ENCODE measurements at regions of chr12 and their contacts with region 1.

Region 1: GRCh38 chr12:98644711-98645402 is at the starts of genes APAF1 and IKBIP:
- DNase-seq: peak; percentile 94 to 98
- H3K4me3 ChIP-seq: peak within 1 kb of the TSS; percentile 95
- H3K4me3 Mint-ChIP-seq: peak within 1 kb of the TSS; percentile 86
- H3K27ac Mint-ChIP-seq: peak within 1 kb of the TSS; percentile 75
- H3K4me1 ChIP-seq: peaks cover 4% of the 10 kb centered on the region; the same call in 1 of the 2 replicates
- H3K4me1 Mint-ChIP-seq: peaks cover 7% of the 10 kb centered on the region
- H3K27me3 ChIP-seq: no peaks in the 10 kb centered on the region
- H3K27me3 Mint-ChIP-seq: no peaks in the 10 kb centered on the region
- CTCF ChIP-seq: no peak
- total RNA-seq, gene APAF1: 13.4 and 16.5 TPM in 2 replicates
- total RNA-seq, gene IKBIP: 9.9 and 10.9 TPM in 2 replicates

Region 2: GRCh38 chr12:96719660-96720363 is 1925.0 kb before region 1 on chr12:
- CTCF ChIA-PET with region 1: no interaction called
- POLR2A ChIA-PET with region 1: no interaction called
- intact Hi-C with region 1: no loop called
- DNase-seq: no peak
- H3K4me3 ChIP-seq: no peak overlapping the region
- H3K4me3 Mint-ChIP-seq: peak overlapping the region; percentile 63
- H3K27ac Mint-ChIP-seq: no peak overlapping the region
- H3K4me1 ChIP-seq: no peaks in the 10 kb centered on the region
- H3K4me1 Mint-ChIP-seq: no peaks in the 10 kb centered on the region
- H3K27me3 ChIP-seq: no peaks in the 10 kb centered on the region
- H3K27me3 Mint-ChIP-seq: no peaks in the 10 kb centered on the region
- CTCF ChIP-seq: no peak

Region 3: GRCh38 chr12:98572010-98572409 is 72.8 kb before region 1 on chr12:
- CTCF ChIA-PET with region 1: interaction called, 4 read pairs
- POLR2A ChIA-PET with region 1: no interaction called
- intact Hi-C with region 1: loop called (anchors 2 kb)
- DNase-seq: no peak
- H3K4me3 ChIP-seq: no peak overlapping the region
- H3K4me3 Mint-ChIP-seq: no peak overlapping the region
- H3K27ac Mint-ChIP-seq: no peak overlapping the region
- H3K4me1 ChIP-seq: peaks cover 44% of the 10 kb centered on the region
- H3K4me1 Mint-ChIP-seq: no peaks in the 10 kb centered on the region
- H3K27me3 ChIP-seq: no peaks in the 10 kb centered on the region
- H3K27me3 Mint-ChIP-seq: no peaks in the 10 kb centered on the region
- CTCF ChIP-seq: peak; percentile 19 to 27

Region 4: GRCh38 chr12:98606357-98606988 is 38.4 kb before region 1 on chr12:
- CTCF ChIA-PET with region 1: no interaction called
- POLR2A ChIA-PET with region 1: no interaction called
- intact Hi-C with region 1: loop called (anchors 2 kb)
- DNase-seq: no peak
- H3K4me3 ChIP-seq: no peak overlapping the region
- H3K4me3 Mint-ChIP-seq: no peak overlapping the region
- H3K27ac Mint-ChIP-seq: no peak overlapping the region
- H3K4me1 ChIP-seq: no peaks in the 10 kb centered on the region
- H3K4me1 Mint-ChIP-seq: no peaks in the 10 kb centered on the region
- H3K27me3 ChIP-seq: no peaks in the 10 kb centered on the region
- H3K27me3 Mint-ChIP-seq: no peaks in the 10 kb centered on the region
- CTCF ChIP-seq: no peak